ENCODE measurements at regions of chr9 and their contacts with region 1.

Region 1: DNA sequence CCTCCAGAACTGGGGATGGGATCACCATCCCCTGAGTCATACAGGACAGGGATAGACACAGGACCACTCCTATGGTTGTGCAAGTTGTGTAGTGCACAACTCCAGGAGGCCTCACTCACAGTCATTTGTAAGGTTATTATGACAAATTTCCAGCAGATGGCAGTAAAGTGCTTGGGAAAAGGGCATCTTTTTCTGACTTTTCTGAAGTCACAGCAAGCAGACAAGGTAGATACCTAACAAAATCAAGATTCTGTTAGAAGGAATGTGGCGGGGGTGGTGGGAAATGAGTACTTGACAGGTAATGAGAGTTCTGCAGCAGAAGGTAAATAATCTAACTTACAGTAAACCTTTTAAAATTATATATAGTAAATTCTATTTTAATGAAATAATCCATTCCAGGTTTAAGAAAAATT is 16.7 kb upstream of the KIF27 start:
- DNase-seq: peak in 19 of 35 experiments; percentile 2 to 82 (median 13)
- ATAC-seq: peak; percentile 60 to 71 (median 62)
- H3K4me3 ChIP-seq: no peak overlapping the region
- H3K4me3 Mint-ChIP-seq: no peak overlapping the region
- H3K27ac ChIP-seq: no peak overlapping the region
- H3K27ac Mint-ChIP-seq: no peak overlapping the region
- H3K4me1 ChIP-seq: no peaks in the 10 kb centered on the region
- H3K4me1 Mint-ChIP-seq: peaks cover 0 to 4% (median 0%) of the 10 kb centered on the region in 3 donors
- H3K27me3 ChIP-seq: no peaks in the 10 kb centered on the region
- H3K27me3 Mint-ChIP-seq: no peaks in the 10 kb centered on the region

Region 2: GRCh38 chr9:83372957-83373356 is 565.0 kb before region 1 on chr9:
- CTCF ChIA-PET with region 1: no interaction called
- POLR2A ChIA-PET with region 1: no interaction called
- DNase-seq: no peak
- ATAC-seq: no peak
- H3K4me3 ChIP-seq: no peak overlapping the region
- H3K4me3 Mint-ChIP-seq: no peak overlapping the region
- H3K27ac ChIP-seq: no peak overlapping the region
- H3K27ac Mint-ChIP-seq: no peak overlapping the region
- H3K4me1 ChIP-seq: no peaks in the 10 kb centered on the region
- H3K4me1 Mint-ChIP-seq: no peaks in the 10 kb centered on the region
- H3K27me3 ChIP-seq: no peaks in the 10 kb centered on the region
- H3K27me3 Mint-ChIP-seq: no peaks in the 10 kb centered on the region

Region 3: GRCh38 chr9:83511051-83511450 is 426.9 kb before region 1 on chr9:
- CTCF ChIA-PET with region 1: no interaction called
- POLR2A ChIA-PET with region 1: no interaction called
- DNase-seq: no peak
- ATAC-seq: no peak
- H3K4me3 ChIP-seq: no peak overlapping the region
- H3K4me3 Mint-ChIP-seq: no peak overlapping the region
- H3K27ac ChIP-seq: no peak overlapping the region
- H3K27ac Mint-ChIP-seq: no peak overlapping the region
- H3K4me1 ChIP-seq: peaks cover 0 to 7% of the 10 kb centered on the region in 2 experiments
- H3K4me1 Mint-ChIP-seq: peaks cover 9 to 12% (median 10%) of the 10 kb centered on the region in 3 donors
- H3K27me3 ChIP-seq: peaks cover 0 to 3% of the 10 kb centered on the region in 2 experiments
- H3K27me3 Mint-ChIP-seq: peaks cover 0 to 2% of the 10 kb centered on the region in 2 donors

Region 4: DNA sequence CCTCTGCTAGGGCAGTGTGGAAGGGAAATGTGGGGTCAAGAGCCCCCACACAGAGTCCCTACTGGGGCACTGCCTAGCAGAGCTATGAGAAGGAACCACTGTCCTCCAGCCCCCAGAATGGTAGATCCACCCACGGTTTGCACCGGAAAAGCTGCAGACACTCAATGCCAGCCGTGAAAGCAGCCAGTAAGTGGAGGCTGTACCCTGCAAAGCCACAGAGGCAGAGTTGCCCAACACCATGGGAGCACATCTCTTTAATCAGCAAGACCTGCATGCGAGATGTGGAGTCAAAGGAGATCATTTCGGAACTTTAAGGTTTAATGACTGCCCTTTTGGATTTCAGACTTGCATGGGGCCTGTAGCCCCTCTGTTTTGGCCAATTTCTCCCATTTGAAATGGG is 172.5 kb before region 1 on chr9:
- CTCF ChIA-PET with region 1: no interaction called
- POLR2A ChIA-PET with region 1: no interaction called
- DNase-seq: no peak
- ATAC-seq: no peak
- H3K4me3 ChIP-seq: no peak overlapping the region
- H3K4me3 Mint-ChIP-seq: no peak overlapping the region
- H3K27ac ChIP-seq: no peak overlapping the region
- H3K27ac Mint-ChIP-seq: no peak overlapping the region
- H3K4me1 ChIP-seq: no peaks in the 10 kb centered on the region
- H3K4me1 Mint-ChIP-seq: no peaks in the 10 kb centered on the region
- H3K27me3 ChIP-seq: no peaks in the 10 kb centered on the region
- H3K27me3 Mint-ChIP-seq: no peaks in the 10 kb centered on the region

Region 5: DNA sequence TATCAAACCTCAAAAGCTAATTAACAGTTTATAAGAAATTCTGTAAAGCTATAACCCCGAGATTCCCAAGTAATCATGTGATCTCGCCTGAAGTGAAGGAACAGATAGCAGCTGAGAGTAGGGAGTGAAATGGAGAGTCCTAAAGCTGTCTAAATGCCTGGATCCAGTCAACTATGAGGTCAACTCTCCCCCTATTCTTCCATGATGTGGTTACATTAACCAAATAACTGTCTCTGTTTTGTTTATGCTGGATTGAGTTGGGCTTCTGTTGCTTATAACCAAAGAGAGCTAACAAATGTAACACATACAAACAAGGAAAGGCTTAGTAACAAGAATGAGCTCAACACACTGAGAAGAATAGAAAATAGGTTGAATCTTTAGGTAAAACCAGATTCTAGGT is 162.0 kb before region 1 on chr9:
- CTCF ChIA-PET with region 1: interaction called in 1 of 2 experiments, 11 read pairs
- POLR2A ChIA-PET with region 1: no interaction called
- DNase-seq: no peak
- ATAC-seq: no peak
- H3K4me3 ChIP-seq: no peak overlapping the region
- H3K4me3 Mint-ChIP-seq: no peak overlapping the region
- H3K27ac ChIP-seq: no peak overlapping the region
- H3K27ac Mint-ChIP-seq: no peak overlapping the region
- H3K4me1 ChIP-seq: no peaks in the 10 kb centered on the region
- H3K4me1 Mint-ChIP-seq: no peaks in the 10 kb centered on the region
- H3K27me3 ChIP-seq: no peaks in the 10 kb centered on the region
- H3K27me3 Mint-ChIP-seq: no peaks in the 10 kb centered on the region

Region 6: DNA sequence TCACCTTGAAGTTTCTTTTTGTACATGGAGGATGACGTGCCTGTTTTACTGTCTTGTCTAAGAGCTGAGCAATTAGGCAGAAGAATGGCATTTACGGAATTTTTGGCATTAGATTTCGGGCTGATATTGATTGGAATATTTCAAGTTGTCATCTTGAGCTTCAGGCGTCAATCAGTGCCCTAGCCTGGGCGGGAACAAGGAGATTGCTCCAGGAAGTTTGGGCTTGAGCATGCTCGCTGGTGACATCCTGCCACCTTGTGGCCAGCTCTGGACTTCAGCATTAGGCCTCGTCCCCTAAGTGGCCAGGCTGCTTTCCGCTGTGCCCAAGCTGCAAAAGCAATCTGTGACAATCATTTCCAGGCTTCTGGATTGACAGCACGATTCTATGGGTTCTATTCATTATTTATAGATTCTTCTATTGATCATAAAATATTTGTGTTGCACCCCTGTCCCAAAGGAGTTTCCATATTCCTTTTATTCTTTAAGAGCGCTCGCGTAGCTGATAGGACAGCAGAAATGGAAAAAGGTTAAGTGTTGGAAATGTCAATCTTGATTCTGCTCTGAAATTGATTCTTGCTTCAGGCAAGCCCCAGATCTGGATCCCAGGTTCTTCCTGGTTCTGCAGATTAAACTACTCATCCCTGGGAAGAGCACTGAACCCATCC is 323.3 kb after region 1 on chr9:
- CTCF ChIA-PET with region 1: interaction called, 9 to 12 read pairs
- POLR2A ChIA-PET with region 1: no interaction called
- DNase-seq: peak in 30 of 35 experiments; percentile 2 to 66 (median 26)
- ATAC-seq: peak; percentile 42 to 63 (median 55)
- H3K4me3 ChIP-seq: no peak overlapping the region
- H3K4me3 Mint-ChIP-seq: peak overlapping the region in 1 of 3 donors; percentile 29
- H3K27ac ChIP-seq: no peak overlapping the region
- H3K27ac Mint-ChIP-seq: no peak overlapping the region
- H3K4me1 ChIP-seq: no peaks in the 10 kb centered on the region
- H3K4me1 Mint-ChIP-seq: peaks cover 4 to 9% (median 6%) of the 10 kb centered on the region in 3 donors
- H3K27me3 ChIP-seq: no peaks in the 10 kb centered on the region
- H3K27me3 Mint-ChIP-seq: peaks cover 3 to 10% of the 10 kb centered on the region in 2 donors